PC-3 (cell line): ENCODE measurements at regions of chr14 and their contacts with region 1.

Region 1: GRCh38 chr14:52402812-52403526 is 88.9 kb downstream of the PTGER2 start:
- DNase-seq: peak; percentile 83
- ATAC-seq: peak; percentile 86
- H3K4me3 ChIP-seq: no peak overlapping the region
- H3K27ac ChIP-seq: no peak overlapping the region
- H3K4me1 ChIP-seq: peaks cover 17% of the 10 kb centered on the region
- H3K27me3 ChIP-seq: no peaks in the 10 kb centered on the region
- CTCF ChIP-seq: no peak

Region 2: GRCh38 chr14:52434955-52435354 is 32.0 kb after region 1 on chr14:
- CTCF ChIA-PET with region 1: no interaction called
- POLR2A ChIA-PET with region 1: interaction called, 11 read pairs
- intact Hi-C with region 1: no loop called
- DNase-seq: no peak
- ATAC-seq: peak; percentile 91
- H3K4me3 ChIP-seq: no peak overlapping the region
- H3K27ac ChIP-seq: no peak overlapping the region
- H3K4me1 ChIP-seq: peaks cover 4% of the 10 kb centered on the region; the same call in 1 of the 2 replicates
- H3K27me3 ChIP-seq: no peaks in the 10 kb centered on the region
- CTCF ChIP-seq: no peak

Region 3: DNA sequence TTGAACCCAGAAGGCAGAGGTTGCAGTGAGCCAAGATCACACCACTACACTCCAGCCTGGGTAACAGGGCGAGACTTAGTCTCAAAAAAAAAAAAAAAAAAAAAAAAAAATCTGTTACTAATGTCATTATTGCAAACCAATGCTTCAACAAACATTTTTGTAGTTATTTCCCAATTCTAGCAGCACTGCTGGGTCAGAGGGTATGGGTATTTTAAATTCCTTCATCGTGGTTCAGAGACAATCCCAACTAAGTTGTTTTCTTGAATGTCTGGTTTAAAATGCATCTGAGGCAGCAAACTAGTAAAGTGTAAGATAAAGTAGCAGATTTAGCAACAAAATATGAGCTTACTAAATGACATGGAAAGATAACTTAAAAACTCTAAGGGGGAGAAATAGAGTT is 482.3 kb after region 1 on chr14:
- CTCF ChIA-PET with region 1: no interaction called
- POLR2A ChIA-PET with region 1: no interaction called
- intact Hi-C with region 1: no loop called
- DNase-seq: no peak
- ATAC-seq: no peak
- H3K4me3 ChIP-seq: no peak overlapping the region
- H3K27ac ChIP-seq: no peak overlapping the region
- H3K4me1 ChIP-seq: no peaks in the 10 kb centered on the region
- H3K27me3 ChIP-seq: no peaks in the 10 kb centered on the region
- CTCF ChIP-seq: no peak

Region 4: GRCh38 chr14:53444677-53445312 is 1041.8 kb after region 1 on chr14:
- CTCF ChIA-PET with region 1: no interaction called
- POLR2A ChIA-PET with region 1: no interaction called
- intact Hi-C with region 1: no loop called
- DNase-seq: peak; percentile 60
- ATAC-seq: peak; percentile 92
- H3K4me3 ChIP-seq: no peak overlapping the region
- H3K27ac ChIP-seq: no peak overlapping the region
- H3K4me1 ChIP-seq: no peaks in the 10 kb centered on the region
- H3K27me3 ChIP-seq: no peaks in the 10 kb centered on the region
- CTCF ChIP-seq: no peak